ENCODE measurements at regions of chr17 and their contacts with region 1.

Region 1: GRCh38 chr17:29345086-29345869 is 44.9 kb upstream of the TAOK1 start:
- DNase-seq: no peak
- ATAC-seq: no peak
- H3K4me3 ChIP-seq: no peak overlapping the region
- H3K27ac ChIP-seq: no peak overlapping the region
- H3K4me1 ChIP-seq: peaks cover 3% of the 10 kb centered on the region; the same call in 1 of the 2 replicates
- H3K27me3 ChIP-seq: peaks cover 5% of the 10 kb centered on the region; the same call in 1 of the 2 replicates
- CTCF ChIP-seq: no peak

Region 2: GRCh38 chr17:29273924-29274323 is 71.4 kb before region 1 on chr17:
- CTCF ChIA-PET with region 1: no interaction called
- POLR2A ChIA-PET with region 1: no interaction called
- in situ Hi-C with region 1: no loop called
- intact Hi-C with region 1: no loop called
- DNase-seq: no peak
- ATAC-seq: no peak
- H3K4me3 ChIP-seq: no peak overlapping the region
- H3K27ac ChIP-seq: no peak overlapping the region
- H3K4me1 ChIP-seq: peaks cover 4% of the 10 kb centered on the region
- H3K27me3 ChIP-seq: no peaks in the 10 kb centered on the region
- CTCF ChIP-seq: no peak

Region 3: GRCh38 chr17:29357821-29358232 is 12.5 kb after region 1 on chr17:
- CTCF ChIA-PET with region 1: no interaction called
- POLR2A ChIA-PET with region 1: interaction called, 13 read pairs
- in situ Hi-C with region 1: no loop called
- intact Hi-C with region 1: no loop called
- DNase-seq: no peak
- ATAC-seq: no peak
- H3K4me3 ChIP-seq: no peak overlapping the region
- H3K27ac ChIP-seq: no peak overlapping the region
- H3K4me1 ChIP-seq: 0 out of 2 replicates have a peak, but pooled peaks cover 2% of the 10 kb centered on the region
- H3K27me3 ChIP-seq: no peaks in the 10 kb centered on the region
- CTCF ChIP-seq: no peak

Region 4: DNA sequence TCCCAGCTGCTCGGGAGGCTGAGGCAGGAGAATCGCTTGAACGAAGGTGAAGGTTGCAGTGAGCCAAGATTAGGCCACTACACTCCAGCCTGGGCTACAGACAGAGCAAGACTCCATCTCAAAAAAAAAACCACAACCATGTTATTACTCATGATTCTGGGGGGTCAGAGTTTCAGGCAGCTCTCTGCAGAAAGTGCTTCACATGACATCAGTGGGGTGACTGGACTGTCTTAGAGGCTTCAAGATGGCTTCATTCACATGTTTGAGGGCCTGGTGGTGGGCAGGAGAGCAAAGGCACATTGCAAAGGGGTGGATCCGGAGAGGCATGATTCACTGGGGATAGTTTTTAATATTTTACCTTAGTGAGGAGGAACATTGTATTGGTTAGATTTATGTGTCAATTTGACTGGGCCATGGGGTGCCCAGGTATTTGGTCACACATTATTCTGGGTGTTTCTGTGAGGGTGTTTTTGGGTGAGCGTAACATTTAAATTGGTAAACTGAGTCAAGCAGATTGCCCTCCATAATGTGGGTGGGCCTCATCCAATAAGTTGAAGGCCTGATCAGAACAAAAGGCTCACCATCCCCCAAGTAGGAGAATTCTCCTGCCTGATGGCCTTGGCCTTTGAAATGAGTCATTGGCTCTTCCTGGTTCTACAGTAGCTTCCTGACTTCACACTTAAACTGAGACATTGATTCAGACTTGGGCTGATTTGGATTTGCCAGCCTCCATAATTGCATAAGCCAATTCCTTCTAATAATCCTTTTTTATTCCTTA is 1241.7 kb after region 1 on chr17:
- CTCF ChIA-PET with region 1: no interaction called
- POLR2A ChIA-PET with region 1: no interaction called
- in situ Hi-C with region 1: no loop called
- intact Hi-C with region 1: no loop called
- DNase-seq: no peak
- ATAC-seq: no peak
- H3K4me3 ChIP-seq: no peak overlapping the region
- H3K27ac ChIP-seq: no peak overlapping the region
- H3K4me1 ChIP-seq: no peaks in the 10 kb centered on the region
- H3K27me3 ChIP-seq: no peaks in the 10 kb centered on the region
- CTCF ChIP-seq: no peak